Activated T-helper 1 cell treated with anti-CD3 and anti-CD28 coated beads, Interleukin-12 subunit alpha, Interleukin-12 subunit beta, Interleukin-2, Interleukin-4 antibody, amounts not matched to agents 30 ng/mL and 10 ng/mL and 1 ng/mL, durations not matched to agents 14 hours and 24 hours and 36 hours (primary cell): ENCODE measurements at regions of chr1 and their contacts with region 1.

Region 1: DNA sequence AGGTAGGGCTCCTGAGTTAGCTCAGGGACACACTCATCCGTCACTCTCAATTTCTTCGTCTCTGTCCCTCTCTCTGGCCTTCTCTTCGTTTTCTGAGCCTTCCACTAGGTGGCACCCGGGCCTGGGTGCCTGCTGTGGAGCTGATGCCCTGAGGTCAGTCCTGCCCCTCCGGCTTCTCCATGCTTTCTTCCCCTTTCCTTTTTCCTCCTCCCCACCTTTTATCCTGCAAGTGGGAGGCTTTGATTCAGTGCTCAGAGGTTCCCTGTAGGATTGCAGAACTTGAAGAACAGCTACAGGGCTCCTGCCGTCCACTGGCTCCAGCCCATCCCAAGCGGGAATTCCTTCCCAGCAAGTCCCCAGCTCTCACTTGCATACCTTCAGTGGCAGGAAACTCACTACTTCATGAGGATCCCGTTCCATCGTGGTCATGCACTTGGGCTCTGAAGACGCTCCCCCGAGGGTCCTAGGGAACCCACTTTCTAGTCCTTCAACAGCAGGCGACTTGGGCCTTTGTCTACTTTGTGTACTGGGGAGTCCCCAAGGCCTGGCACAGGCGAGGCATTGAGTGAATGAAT is 45.6 kb downstream of the SRRM1 start:
- DNase-seq: peak; percentile 35
- H3K4me3 Mint-ChIP-seq: no peak overlapping the region
- H3K27ac Mint-ChIP-seq: no peak overlapping the region
- H3K4me1 Mint-ChIP-seq: no peaks in the 10 kb centered on the region
- H3K27me3 Mint-ChIP-seq: peaks cover 6% of the 10 kb centered on the region

Region 2: DNA sequence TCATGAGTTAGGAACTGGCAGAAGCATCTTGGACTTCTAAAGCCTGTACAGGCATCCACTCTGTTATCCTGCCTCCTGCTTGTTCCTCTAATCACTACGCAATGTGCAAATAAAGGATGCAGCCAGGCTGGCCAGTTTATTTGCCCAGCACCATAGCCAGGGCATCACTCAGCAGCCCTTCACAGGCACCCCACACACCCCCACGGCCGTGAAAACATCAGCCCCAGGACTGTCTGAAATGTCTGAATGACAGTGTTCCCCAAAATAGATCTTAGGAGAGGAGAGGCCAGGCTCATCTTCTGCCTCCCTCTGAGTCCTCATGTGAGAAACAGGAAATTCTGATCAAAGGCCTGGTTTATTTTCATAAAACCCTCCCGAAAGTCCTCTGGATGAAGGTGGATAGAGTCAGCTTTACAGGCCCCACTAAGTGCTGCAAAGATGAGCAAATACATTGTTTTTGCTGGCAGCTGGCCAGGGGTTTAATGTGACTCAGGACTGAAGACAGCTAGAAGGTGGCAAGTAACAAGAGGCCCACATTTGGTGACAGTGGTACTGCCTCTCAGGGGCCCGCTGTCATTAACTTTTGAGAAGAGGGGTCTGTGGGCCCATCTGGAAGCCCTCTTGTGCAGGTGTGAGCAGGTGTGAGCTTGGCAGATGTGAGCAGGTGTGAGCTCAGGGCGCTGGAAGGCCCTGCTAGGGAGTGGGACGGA is 336.6 kb before region 1 on chr1:
- intact Hi-C with region 1: no loop called
- DNase-seq: no peak
- H3K4me3 Mint-ChIP-seq: no peak overlapping the region
- H3K27ac Mint-ChIP-seq: peak overlapping the region; percentile 67
- H3K4me1 Mint-ChIP-seq: peaks cover 45% of the 10 kb centered on the region
- H3K27me3 Mint-ChIP-seq: peaks cover 10% of the 10 kb centered on the region

Region 3: DNA sequence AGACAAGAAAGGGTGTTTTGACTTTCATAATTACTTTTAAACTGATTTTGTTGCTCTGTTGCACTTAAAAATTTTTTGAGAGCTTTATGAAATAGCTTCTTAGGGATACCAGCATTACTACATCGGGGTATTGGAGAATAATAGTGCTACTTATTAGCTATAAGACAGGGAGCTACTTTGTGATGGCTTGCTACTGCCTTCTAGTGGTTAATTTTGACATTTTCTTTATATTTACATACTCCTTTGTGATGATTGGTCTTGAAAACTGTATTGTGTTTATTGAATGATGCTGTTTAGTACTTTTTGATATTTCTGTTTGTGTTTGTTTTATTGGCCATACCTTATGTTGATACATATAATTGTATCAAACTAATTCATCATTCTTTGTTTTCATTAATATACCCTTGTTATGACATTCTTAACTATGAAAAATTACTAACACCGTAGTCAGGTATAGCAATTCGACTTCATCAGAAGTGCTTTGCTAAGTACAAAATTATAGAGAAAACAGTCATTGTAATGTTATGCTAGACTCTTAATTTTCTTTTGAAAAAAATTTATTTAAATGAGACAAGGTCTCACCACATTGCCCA is 142.1 kb after region 1 on chr1:
- intact Hi-C with region 1: loop called (anchors 2 kb)
- DNase-seq: no peak
- H3K4me3 Mint-ChIP-seq: no peak overlapping the region
- H3K27ac Mint-ChIP-seq: no peak overlapping the region
- H3K4me1 Mint-ChIP-seq: no peaks in the 10 kb centered on the region
- H3K27me3 Mint-ChIP-seq: peaks cover 3% of the 10 kb centered on the region